Activated CD8-positive, alpha-beta T cell treated with anti-CD3 and anti-CD28 coated beads for 36 hours (primary cell): ENCODE measurements at regions of chr1 and their contacts with region 1.

Region 1: GRCh38 chr1:212035123-212035834 is at the starts of genes DTL and INTS7:
- DNase-seq: peak; percentile 99
- ATAC-seq: peak; percentile 87
- H3K4me3 Mint-ChIP-seq: peak within 1 kb of the TSS; percentile 97
- H3K27ac Mint-ChIP-seq: peak within 1 kb of the TSS; percentile 100
- H3K4me1 Mint-ChIP-seq: peaks cover 52% of the 10 kb centered on the region
- H3K27me3 Mint-ChIP-seq: peaks cover 1% of the 10 kb centered on the region
- CTCF ChIP-seq: peak; percentile 88
- total RNA-seq, gene DTL: 92.0 to 95.9 TPM
- total RNA-seq, gene INTS7: 23.2 to 25.4 TPM

Region 2: GRCh38 chr1:211680752-211681327 is 354.4 kb before region 1 on chr1:
- CTCF ChIA-PET with region 1: interaction called, 97 read pairs
- POLR2A ChIA-PET with region 1: interaction called, 9 read pairs
- intact Hi-C with region 1: loop called (anchors 2 kb)
- DNase-seq: peak; percentile 79
- ATAC-seq: peak; percentile 93
- H3K4me3 Mint-ChIP-seq: no peak overlapping the region
- H3K27ac Mint-ChIP-seq: peak overlapping the region; percentile 83
- H3K4me1 Mint-ChIP-seq: peaks cover 8% of the 10 kb centered on the region
- H3K27me3 Mint-ChIP-seq: no peaks in the 10 kb centered on the region
- CTCF ChIP-seq: peak; percentile 69

Region 3: DNA sequence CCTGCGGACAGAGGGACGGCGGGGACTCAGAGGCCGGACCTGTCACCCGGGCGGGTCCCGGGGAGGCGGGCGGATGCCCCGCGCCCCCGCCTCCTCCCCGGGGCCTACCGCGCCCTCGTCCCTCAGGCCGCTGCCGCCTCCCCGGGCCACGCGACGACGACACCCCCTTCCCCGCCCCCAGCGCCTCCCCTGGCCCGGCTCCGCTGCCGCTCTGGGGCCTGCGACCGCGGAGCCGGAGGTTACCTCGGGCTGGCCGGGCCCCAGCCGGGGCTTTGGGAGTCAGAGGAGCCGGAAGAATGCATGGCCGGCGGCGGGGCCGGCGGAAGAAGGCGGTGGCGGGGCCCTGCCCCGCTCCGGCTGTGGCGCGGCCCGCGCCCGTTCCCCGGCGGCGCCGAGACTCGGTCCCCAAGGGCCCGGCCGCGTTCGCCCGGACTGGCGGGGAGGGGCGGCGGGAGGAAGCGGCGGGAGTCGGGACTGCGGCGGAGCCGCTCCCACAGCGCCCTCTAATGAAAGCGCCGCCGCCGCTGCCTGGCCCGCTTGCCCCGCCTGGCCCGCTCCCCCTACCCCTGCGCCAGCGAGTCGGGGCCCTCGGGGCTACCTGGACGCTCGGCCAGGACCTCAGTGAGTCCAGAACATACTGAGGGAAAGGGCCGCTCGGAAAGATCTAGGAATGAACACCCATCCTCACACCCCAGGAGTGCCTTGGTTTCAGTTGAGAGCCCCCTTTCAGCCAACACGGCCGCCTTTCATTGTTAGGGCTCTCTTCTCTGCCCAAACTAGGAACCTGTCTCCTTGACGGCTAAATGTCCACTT is 204.7 kb before region 1 on chr1 and contains the start of gene LPGAT1:
- CTCF ChIA-PET with region 1: interaction called, 8 read pairs
- POLR2A ChIA-PET with region 1: interaction called, 4 read pairs
- intact Hi-C with region 1: loop called (anchors 5 kb)
- DNase-seq: peak; percentile 74
- ATAC-seq: peak; percentile 74
- H3K4me3 Mint-ChIP-seq: peak within 1 kb of the TSS; percentile 75
- H3K27ac Mint-ChIP-seq: peak within 1 kb of the TSS; percentile 86
- H3K4me1 Mint-ChIP-seq: peaks cover 61% of the 10 kb centered on the region
- H3K27me3 Mint-ChIP-seq: no peaks in the 10 kb centered on the region
- CTCF ChIP-seq: peak; percentile 66
- total RNA-seq, gene LPGAT1: 16.5 to 16.7 TPM

Region 4: DNA sequence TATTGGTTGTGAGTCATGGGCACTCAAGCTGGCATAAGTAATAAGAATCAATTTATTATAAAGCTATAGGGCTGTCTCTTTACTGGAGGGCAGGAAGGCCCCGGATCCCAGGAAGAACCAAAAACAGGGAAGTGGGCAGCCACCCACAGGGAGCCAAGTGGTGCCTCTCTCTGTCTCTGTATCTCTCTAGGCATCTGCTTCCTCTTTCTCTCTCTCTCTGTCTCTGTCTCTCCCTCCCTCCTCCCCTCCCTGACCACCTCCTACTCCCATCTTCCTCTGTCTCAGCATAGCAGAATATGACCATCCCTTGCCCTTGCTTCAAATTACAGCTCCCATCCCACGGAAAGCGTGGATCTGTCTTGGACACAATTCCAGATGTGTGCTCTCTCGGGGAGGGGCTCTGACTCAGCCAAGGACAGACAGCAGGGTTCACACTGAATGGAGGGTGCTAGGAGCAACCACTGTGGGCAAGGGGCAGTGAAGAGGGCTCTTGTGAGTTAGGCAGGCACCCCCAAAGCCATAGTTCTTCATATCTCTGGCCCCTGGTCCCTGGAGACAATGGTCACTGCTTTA is 124.3 kb before region 1 on chr1:
- CTCF ChIA-PET with region 1: no interaction called
- POLR2A ChIA-PET with region 1: no interaction called
- intact Hi-C with region 1: no loop called
- DNase-seq: no peak
- ATAC-seq: no peak
- H3K4me3 Mint-ChIP-seq: no peak overlapping the region
- H3K27ac Mint-ChIP-seq: no peak overlapping the region
- H3K4me1 Mint-ChIP-seq: no peaks in the 10 kb centered on the region
- H3K27me3 Mint-ChIP-seq: peaks cover 2% of the 10 kb centered on the region
- CTCF ChIP-seq: no peak

Region 5: DNA sequence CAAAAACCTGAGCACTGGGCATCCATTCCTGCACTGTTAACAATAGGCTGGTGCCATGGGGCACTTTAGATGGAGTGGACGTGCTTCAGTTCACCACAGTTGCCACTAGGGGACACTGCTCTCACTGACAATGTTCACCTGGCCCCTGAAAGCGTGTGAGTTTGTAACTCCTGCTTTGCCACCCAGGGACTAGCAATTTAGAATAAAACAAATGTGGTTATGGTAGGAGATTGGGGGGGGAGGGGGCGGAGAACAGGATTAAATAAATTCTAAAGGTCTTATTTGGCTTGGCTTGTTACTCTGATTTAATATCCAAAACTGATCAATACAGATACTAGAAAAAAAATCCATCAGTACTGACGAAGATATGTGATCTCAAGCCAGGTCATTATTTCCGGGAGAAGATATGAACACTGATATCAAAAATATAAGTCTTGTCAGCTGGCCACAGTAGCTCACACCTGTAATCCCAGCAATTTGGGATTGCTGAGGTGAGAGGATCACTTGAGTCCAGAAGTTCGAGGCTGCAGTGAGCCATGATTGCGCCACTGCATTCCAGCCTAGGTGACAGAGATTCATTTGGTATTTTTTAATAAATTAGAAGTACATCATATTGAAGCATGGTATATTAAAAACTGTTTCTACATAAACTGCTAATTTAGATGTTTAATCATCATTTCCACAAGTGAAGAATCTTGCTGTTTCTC is 23.1 kb before region 1 on chr1:
- CTCF ChIA-PET with region 1: interaction called, 33 read pairs
- POLR2A ChIA-PET with region 1: interaction called, 5 read pairs
- intact Hi-C with region 1: no loop called
- DNase-seq: peak; percentile 78
- ATAC-seq: peak; percentile 100
- H3K4me3 Mint-ChIP-seq: no peak overlapping the region
- H3K27ac Mint-ChIP-seq: no peak overlapping the region
- H3K4me1 Mint-ChIP-seq: peaks cover 3% of the 10 kb centered on the region
- H3K27me3 Mint-ChIP-seq: no peaks in the 10 kb centered on the region
- CTCF ChIP-seq: peak; percentile 92

Region 6: GRCh38 chr1:212045981-212046380 is 10.7 kb after region 1 on chr1:
- CTCF ChIA-PET with region 1: interaction called, 10 read pairs
- POLR2A ChIA-PET with region 1: interaction called, 13 read pairs
- intact Hi-C with region 1: no loop called
- DNase-seq: no peak
- ATAC-seq: no peak
- H3K4me3 Mint-ChIP-seq: no peak overlapping the region
- H3K27ac Mint-ChIP-seq: no peak overlapping the region
- H3K4me1 Mint-ChIP-seq: peaks cover 4% of the 10 kb centered on the region
- H3K27me3 Mint-ChIP-seq: no peaks in the 10 kb centered on the region
- CTCF ChIP-seq: no peak

Region 7: GRCh38 chr1:212284744-212285684 is 249.7 kb after region 1 on chr1 and contains the start of gene PPP2R5A:
- CTCF ChIA-PET with region 1: interaction called, 15 read pairs
- POLR2A ChIA-PET with region 1: interaction called, 4 read pairs
- intact Hi-C with region 1: no loop called
- DNase-seq: peak; percentile 99
- ATAC-seq: peak; percentile 91
- H3K4me3 Mint-ChIP-seq: peak within 1 kb of the TSS; percentile 96
- H3K27ac Mint-ChIP-seq: peak within 1 kb of the TSS; percentile 97
- H3K4me1 Mint-ChIP-seq: peaks cover 27% of the 10 kb centered on the region
- H3K27me3 Mint-ChIP-seq: no peaks in the 10 kb centered on the region
- CTCF ChIP-seq: peak; percentile 38
- total RNA-seq, gene PPP2R5A: 35.2 to 36.5 TPM

Region 8: GRCh38 chr1:212915245-212916091 is 880.2 kb after region 1 on chr1:
- CTCF ChIA-PET with region 1: no interaction called
- POLR2A ChIA-PET with region 1: no interaction called
- intact Hi-C with region 1: no loop called
- DNase-seq: no peak
- ATAC-seq: no peak
- H3K4me3 Mint-ChIP-seq: no peak overlapping the region
- H3K27ac Mint-ChIP-seq: no peak overlapping the region
- H3K4me1 Mint-ChIP-seq: no peaks in the 10 kb centered on the region
- H3K27me3 Mint-ChIP-seq: peaks cover 1% of the 10 kb centered on the region
- CTCF ChIP-seq: no peak